ENCODE measurements at regions of chr21 and their contacts with region 1.

Region 1: GRCh38 chr21:45019076-45019956 is 55.1 kb upstream of the ADARB1 start:
- DNase-seq: peak in 1 of 2 donors; percentile 33
- ATAC-seq: peak; percentile 43 to 71 (median 56)
- H3K4me3 ChIP-seq: peak overlapping the region in 9 of 10 donors; percentile 38 to 52 (median 48)
- H3K27ac ChIP-seq: peak overlapping the region in 9 of 10 donors; percentile 10 to 73 (median 58)
- H3K4me1 ChIP-seq: peaks cover 0 to 36% (median 17%) of the 10 kb centered on the region in 9 donors
- H3K27me3 ChIP-seq: peaks cover 0 to 34% (median 0%) of the 10 kb centered on the region in 7 donors
- CTCF ChIP-seq: no peak

Region 2: GRCh38 chr21:45064618-45065399 is 45.5 kb after region 1 on chr21:
- intact Hi-C with region 1: loop called in 1 of 10 experiments (anchors 5 kb)
- DNase-seq: no peak
- ATAC-seq: peak in 4 of 8 donors; percentile 39 to 68 (median 54)
- H3K4me3 ChIP-seq: no peak overlapping the region
- H3K27ac ChIP-seq: peak overlapping the region in 1 of 10 donors; percentile 53
- H3K4me1 ChIP-seq: peaks cover 0 to 26% (median 9%) of the 10 kb centered on the region in 9 donors
- H3K27me3 ChIP-seq: no peaks in the 10 kb centered on the region
- CTCF ChIP-seq: no peak